Breast epithelium (tissue), 4 donors: ENCODE measurements at regions of chr12 and their contacts with region 1.

Region 1: DNA sequence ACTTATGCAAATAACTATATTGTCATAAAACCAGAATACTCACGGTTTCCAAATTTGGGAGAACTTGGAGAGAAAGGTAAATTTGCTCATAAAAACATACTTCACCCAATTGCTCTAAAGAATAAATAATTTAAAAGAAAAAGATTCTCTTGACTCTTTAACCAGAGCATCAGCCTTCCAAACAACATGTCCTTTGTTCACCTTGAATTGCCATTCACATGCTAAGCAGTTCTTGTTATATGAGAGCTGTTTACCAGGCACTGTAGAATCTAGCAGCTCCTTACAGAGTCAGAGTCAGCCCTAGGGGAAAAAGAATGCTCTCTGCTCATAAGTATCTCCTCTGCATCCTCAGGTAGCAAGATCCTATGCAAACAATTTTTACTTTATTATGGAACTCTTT is 10.2 kb downstream of the SLCO1A2 start:
- DNase-seq: no peak
- H3K4me3 ChIP-seq: no peak overlapping the region
- H3K27ac ChIP-seq: no peak overlapping the region
- H3K4me1 ChIP-seq: no peaks in the 10 kb centered on the region
- H3K27me3 ChIP-seq: no peaks in the 10 kb centered on the region
- CTCF ChIP-seq: no peak
- POLR2A ChIP-seq: no peak

Region 2: GRCh38 chr12:21718944-21719650 is 394.5 kb after region 1 on chr12:
- intact Hi-C with region 1: loop called (anchors 5 kb)
- DNase-seq: no peak
- H3K4me3 ChIP-seq: no peak overlapping the region
- H3K27ac ChIP-seq: no peak overlapping the region
- H3K4me1 ChIP-seq: no peaks in the 10 kb centered on the region
- H3K27me3 ChIP-seq: no peaks in the 10 kb centered on the region
- CTCF ChIP-seq: no peak
- POLR2A ChIP-seq: no peak